ENCODE measurements at regions of chr6 and their contacts with region 1.

Region 1: DNA sequence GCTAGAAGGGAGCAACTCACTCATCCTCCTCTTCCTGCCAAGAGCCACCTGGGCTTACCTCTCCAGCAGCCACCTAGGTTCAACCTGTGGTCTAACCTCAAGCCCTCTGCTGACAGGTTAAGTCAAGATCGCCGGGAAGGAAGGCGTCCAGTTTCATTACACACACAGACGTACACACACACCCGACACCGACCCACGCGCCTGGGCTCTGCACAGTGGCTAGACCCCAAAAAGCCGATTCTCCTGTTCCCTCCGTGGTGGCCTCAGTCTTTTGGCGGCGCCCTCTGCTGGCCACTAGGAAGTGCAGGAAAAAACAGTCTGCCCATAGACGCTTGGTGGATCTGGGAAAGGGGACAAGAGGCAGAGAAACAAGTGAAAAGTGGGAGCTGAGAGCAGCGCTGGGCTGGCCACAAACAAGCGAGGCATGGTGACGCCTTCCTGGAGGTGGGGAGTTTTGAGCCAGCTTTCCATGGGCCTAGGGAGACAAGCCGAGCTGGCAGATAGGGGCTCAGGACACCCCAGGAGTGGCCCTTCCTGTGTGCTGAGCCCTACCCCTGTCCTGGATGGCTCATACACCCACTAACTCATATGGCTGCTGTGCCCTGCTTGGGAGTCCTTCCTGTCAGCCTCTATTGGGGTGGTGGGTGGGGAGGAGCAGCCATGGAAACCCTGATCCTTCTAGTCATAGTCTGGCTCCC is 52.7 kb downstream of the MRPL14 start:
- DNase-seq: peak; percentile 75 to 86
- ATAC-seq: peak; percentile 69 to 80 (median 72)
- H3K4me3 ChIP-seq: peak overlapping the region; percentile 72
- H3K27ac ChIP-seq: peak overlapping the region; percentile 90
- H3K4me1 ChIP-seq: peaks cover 26% of the 10 kb centered on the region
- H3K27me3 ChIP-seq: no peaks in the 10 kb centered on the region
- CTCF ChIP-seq: peak; percentile 91

Region 2: DNA sequence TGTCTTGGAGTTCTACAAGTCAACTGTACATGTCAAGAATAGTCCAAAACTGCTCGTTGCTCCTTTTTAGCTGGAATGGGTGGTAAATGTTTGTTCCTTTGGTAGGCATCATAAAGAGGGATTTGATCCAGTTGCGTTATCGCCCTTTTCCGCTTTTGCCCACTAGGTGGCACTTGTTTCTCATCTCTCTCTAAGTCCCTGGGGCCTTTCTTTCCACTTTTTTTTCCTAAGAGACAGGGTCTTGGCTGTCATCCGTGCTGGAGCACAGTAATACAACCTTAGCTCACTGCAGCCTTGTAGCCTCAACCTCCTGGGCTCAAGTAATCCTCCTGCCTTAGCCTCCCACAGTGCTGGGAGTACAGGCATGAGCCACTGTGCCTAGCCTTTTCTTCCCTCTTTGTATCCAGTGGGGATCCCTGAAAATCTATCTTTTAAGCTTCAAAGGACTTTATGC is 466.3 kb before region 1 on chr6:
- intact Hi-C with region 1: loop called in 1 of 2 experiments (anchors 2 kb)
- DNase-seq: peak; percentile 56 to 69
- ATAC-seq: peak; percentile 63 to 82 (median 70)
- H3K4me3 ChIP-seq: no peak overlapping the region
- H3K27ac ChIP-seq: no peak overlapping the region
- H3K4me1 ChIP-seq: no peaks in the 10 kb centered on the region
- H3K27me3 ChIP-seq: no peaks in the 10 kb centered on the region
- CTCF ChIP-seq: peak; percentile 82

Region 3: GRCh38 chr6:43667245-43668150 is 407.1 kb before region 1 on chr6:
- intact Hi-C with region 1: loop called in 1 of 2 experiments (anchors 1 kb)
- DNase-seq: peak; percentile 84 to 91
- ATAC-seq: peak; percentile 61 to 77 (median 72)
- H3K4me3 ChIP-seq: peak overlapping the region; percentile 38
- H3K27ac ChIP-seq: peak overlapping the region; percentile 83
- H3K4me1 ChIP-seq: peaks cover 54% of the 10 kb centered on the region
- H3K27me3 ChIP-seq: no peaks in the 10 kb centered on the region
- CTCF ChIP-seq: peak; percentile 96

Region 4: DNA sequence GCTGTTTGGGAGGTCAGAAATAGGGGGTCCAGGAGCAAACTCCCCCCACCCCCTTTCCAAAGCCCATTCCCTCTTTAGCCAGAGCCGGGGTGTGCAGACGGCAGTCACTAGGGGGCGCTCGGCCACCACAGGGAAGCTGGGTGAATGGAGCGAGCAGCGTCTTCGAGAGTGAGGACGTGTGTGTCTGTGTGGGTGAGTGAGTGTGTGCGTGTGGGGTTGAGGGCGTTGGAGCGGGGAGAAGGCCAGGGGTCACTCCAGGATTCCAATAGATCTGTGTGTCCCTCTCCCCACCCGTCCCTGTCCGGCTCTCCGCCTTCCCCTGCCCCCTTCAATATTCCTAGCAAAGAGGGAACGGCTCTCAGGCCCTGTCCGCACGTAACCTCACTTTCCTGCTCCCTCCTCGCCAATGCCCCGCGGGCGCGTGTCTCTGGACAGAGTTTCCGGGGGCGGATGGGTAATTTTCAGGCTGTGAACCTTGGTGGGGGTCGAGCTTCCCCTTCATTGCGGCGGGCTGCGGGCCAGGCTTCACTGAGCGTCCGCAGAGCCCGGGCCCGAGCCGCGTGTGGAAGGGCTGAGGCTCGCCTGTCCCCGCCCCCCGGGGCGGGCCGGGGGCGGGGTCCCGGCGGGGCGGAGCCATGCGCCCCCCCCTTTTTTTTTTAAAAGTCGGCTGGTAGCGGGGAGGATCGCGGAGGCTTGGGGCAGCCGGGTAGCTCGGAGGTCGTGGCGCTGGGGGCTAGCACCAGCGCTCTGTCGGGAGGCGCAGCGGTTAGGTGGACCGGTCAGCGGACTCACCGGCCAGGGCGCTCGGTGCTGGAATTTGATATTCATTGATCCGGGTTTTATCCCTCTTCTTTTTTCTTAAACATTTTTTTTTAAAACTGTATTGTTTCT is 304.8 kb before region 1 on chr6 and contains the start of gene VEGFA:
- intact Hi-C with region 1: loop called (anchors 1 kb)
- DNase-seq: peak; percentile 90 to 95
- ATAC-seq: peak; percentile 67 to 70 (median 68)
- H3K4me3 ChIP-seq: peak within 1 kb of the TSS; percentile 97
- H3K27ac ChIP-seq: peak within 1 kb of the TSS; percentile 99
- H3K4me1 ChIP-seq: peaks cover 17% of the 10 kb centered on the region
- H3K27me3 ChIP-seq: no peaks in the 10 kb centered on the region
- CTCF ChIP-seq: peak; percentile 95
- total RNA-seq, gene VEGFA: 132 to 345 (median 208) TPM

Region 5: DNA sequence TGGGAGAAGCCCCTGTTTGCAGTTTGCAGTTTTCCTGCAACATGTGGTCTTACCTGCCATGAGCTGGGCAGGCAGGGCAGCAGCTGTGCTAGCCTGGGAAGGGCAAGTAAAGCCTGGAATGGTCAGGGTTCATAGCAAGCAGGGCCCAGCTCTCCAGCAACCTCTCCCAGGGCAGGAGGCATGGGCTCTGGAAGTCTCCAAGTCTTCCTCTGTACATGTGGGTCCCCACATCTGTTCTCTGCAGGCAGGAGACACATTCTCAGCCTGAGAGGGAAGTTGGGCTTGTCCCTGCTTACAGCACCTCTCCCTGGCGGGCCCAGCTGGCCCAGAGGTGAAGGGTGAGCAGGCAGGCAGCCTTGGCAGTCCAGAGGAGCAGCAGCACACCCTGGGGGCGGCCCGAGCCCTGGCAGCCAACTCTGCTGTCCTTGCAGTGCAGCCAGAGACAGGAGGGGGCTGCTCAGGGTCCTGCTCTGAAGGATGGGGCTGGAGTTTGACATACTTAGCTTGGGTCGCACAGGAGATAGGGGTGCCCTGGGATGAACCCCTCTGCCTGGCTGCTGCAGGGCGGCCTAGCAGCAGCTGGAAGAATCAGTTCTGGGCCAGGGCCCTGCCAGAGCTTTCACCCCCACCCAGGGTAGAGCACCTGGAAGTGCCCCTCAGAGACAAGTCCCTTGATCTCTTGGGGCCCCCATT is 123.4 kb before region 1 on chr6:
- intact Hi-C with region 1: loop called (anchors 2 to 5 kb)
- DNase-seq: peak; percentile 61 to 76
- ATAC-seq: peak; percentile 16 to 31 (median 25)
- H3K4me3 ChIP-seq: no peak overlapping the region
- H3K27ac ChIP-seq: peak overlapping the region; percentile 86
- H3K4me1 ChIP-seq: peaks cover 21% of the 10 kb centered on the region
- H3K27me3 ChIP-seq: no peaks in the 10 kb centered on the region
- CTCF ChIP-seq: peak; percentile 45